ENCODE measurements at regions of chr11 and their contacts with region 1.

Region 1: GRCh38 chr11:130894322-130895025 is 21.8 kb downstream of the SNX19 start:
- DNase-seq: peak; percentile 53 to 72
- ATAC-seq: peak in 5 of 8 donors; percentile 42 to 48 (median 44)
- H3K4me3 ChIP-seq: no peak overlapping the region
- H3K27ac ChIP-seq: peak overlapping the region in 5 of 10 donors; percentile 6 to 89 (median 50)
- H3K4me1 ChIP-seq: peaks cover 0 to 63% (median 41%) of the 10 kb centered on the region in 9 donors
- H3K27me3 ChIP-seq: no peaks in the 10 kb centered on the region
- CTCF ChIP-seq: peak; percentile 75 to 93 (median 88)

Region 2: DNA sequence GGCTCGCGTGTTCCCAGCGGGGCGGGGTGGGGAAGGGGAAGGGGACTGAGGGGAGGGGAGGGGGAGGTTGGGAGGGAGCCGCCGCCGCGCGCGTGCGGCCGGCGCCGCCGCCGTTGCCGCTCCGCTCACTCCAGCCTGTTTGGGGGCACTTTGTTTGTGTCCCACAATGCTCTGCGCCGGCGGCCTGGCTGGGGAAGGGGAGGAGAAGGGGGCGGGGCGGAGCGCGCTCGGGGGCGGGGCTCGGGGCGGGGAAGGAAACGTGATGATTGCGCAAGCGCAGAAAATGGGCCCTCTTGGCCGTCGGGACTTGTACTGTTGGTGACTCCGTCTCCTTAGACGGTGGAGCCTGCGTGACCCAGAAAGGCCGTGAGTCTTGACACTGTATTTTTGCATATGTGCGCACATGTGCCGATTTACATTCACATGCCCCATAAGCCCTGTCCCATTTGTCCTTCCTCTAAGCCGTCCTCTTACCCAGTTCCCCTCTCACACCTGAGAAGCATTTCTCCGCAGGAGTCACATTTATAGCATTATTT is 579.7 kb before region 1 on chr11 and contains the start of gene ZBTB44:
- intact Hi-C with region 1: loop called in 2 of 10 experiments (anchors 10 kb)
- DNase-seq: peak; percentile 93 to 94
- ATAC-seq: peak; percentile 97 to 98 (median 98)
- H3K4me3 ChIP-seq: peak within 1 kb of the TSS; percentile 65 to 98 (median 89)
- H3K27ac ChIP-seq: peak within 1 kb of the TSS; percentile 87 to 95 (median 92)
- H3K4me1 ChIP-seq: peaks cover 0 to 47% (median 36%) of the 10 kb centered on the region in 9 donors
- H3K27me3 ChIP-seq: no peaks in the 10 kb centered on the region
- CTCF ChIP-seq: no peak
- total RNA-seq, gene ZBTB44: 36.5 to 51.6 (median 39.6) TPM

Region 3: DNA sequence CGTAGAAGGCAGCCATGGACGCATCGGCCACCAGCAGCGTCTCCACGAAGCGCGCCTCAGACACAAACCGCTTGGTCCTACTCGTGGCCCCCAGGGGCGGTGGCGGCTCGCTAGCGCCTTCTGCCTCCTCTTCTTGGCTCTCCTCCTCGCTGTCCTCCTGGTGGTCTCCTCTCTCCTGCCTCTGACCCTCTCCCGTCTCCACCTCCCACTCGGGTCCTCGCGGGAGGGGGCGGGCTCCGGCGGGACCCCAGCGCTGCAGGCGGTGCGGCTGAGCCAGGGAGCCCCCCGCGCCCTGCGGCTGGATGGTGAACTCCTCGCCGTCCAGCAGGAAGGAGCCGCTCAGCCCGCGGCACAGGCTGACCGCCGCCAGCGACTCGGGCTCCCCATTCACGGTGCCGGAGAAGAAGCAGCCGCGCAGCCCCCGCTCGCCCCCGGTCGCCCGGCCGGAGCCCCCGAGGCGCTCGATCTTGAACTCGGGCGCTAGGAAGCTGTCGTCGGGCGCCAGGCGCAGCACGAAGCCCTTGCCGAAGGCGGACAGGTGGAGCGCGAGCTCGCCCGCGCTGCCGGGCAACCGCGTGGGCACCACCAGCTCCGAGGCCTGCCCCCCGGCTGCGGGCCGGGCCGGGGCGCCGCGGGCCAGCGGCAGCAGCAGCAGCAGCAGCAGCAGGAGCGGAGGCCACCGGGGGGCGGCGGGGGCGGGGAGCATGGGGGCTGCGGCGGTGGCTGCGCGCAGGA is 466.7 kb before region 1 on chr11:
- intact Hi-C with region 1: loop called in 7 of 10 experiments (anchors 1 to 10 kb)
- DNase-seq: no peak
- ATAC-seq: peak in 7 of 8 donors; percentile 6 to 33 (median 17)
- H3K4me3 ChIP-seq: peak overlapping the region; percentile 28 to 58 (median 46)
- H3K27ac ChIP-seq: no peak overlapping the region
- H3K4me1 ChIP-seq: peaks cover 5 to 24% (median 18%) of the 10 kb centered on the region in 9 donors
- H3K27me3 ChIP-seq: peaks cover 0 to 65% (median 26%) of the 10 kb centered on the region in 7 donors
- CTCF ChIP-seq: peak in 3 of 9 donors; percentile 30 to 43 (median 36)

Region 4: DNA sequence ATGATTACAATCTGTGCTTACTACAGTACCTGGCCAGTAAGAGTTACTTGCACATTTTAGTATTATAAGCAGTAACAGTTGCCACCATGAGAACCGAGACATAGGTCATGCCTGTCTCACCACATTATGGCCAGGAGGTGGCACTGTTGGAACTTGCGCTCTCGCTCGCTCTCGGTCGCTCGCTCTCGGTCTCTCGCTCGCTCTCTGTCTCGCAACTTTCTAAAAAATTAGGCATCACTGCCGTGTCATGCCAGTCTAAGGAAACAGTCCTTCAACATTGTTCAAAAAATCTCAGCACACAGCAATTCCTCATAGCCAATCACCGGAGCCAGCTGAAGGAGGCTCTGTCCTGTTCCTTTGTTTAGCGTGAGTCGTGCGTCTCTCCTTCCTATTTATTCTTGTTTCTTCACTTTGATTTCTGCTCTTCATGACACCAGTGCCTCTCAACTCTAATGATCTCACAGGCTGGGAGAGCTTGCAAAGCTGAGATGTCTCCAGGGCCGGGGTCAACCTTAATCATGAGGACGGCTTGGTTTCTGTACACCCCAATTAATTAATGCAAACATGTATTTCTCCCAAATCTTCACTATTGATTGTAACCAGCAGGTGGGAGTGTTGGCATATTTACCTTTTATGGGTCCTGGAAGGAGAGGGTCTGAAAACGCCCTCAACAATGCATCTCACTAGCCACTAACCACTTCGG is 459.8 kb before region 1 on chr11:
- intact Hi-C with region 1: loop called (anchors 1 to 10 kb)
- DNase-seq: peak; percentile 62 to 78
- ATAC-seq: peak; percentile 86 to 94 (median 89)
- H3K4me3 ChIP-seq: peak overlapping the region; percentile 11 to 70 (median 60)
- H3K27ac ChIP-seq: peak overlapping the region in 9 of 10 donors; percentile 3 to 85 (median 76)
- H3K4me1 ChIP-seq: peaks cover 0 to 14% (median 12%) of the 10 kb centered on the region in 9 donors
- H3K27me3 ChIP-seq: peaks cover 0 to 14% (median 9%) of the 10 kb centered on the region in 7 donors
- CTCF ChIP-seq: peak; percentile 67 to 83 (median 76)

Region 5: GRCh38 chr11:130861902-130862860 is 32.3 kb before region 1 on chr11:
- intact Hi-C with region 1: loop called in 5 of 10 experiments (anchors 2 to 5 kb)
- DNase-seq: peak; percentile 89 to 91
- ATAC-seq: peak; percentile 50 to 79 (median 68)
- H3K4me3 ChIP-seq: peak overlapping the region in 1 of 10 donors; percentile 23
- H3K27ac ChIP-seq: peak overlapping the region in 3 of 10 donors; percentile 4 to 53 (median 51)
- H3K4me1 ChIP-seq: peaks cover 0 to 36% (median 16%) of the 10 kb centered on the region in 9 donors
- H3K27me3 ChIP-seq: no peaks in the 10 kb centered on the region
- CTCF ChIP-seq: peak; percentile 100

Region 6: DNA sequence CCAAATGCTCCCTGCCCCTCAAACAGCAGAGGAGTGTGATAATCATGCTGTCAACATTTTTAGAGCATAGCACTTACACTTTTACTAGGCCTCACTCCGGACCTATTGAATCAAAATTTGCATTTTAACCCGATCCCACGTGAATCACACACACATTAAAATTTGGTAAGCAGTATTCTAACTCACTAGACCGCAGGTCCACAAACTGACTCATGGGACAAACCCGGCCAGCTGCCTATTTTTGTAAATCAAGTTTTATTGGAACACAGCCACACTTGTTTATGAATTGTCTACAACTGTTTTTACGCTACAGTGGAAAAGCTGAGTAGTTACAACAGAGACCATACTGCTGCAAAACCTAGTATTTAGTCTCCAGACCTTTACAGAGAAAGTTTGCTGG is 21.5 kb before region 1 on chr11:
- intact Hi-C with region 1: no loop called
- DNase-seq: no peak
- ATAC-seq: peak in 6 of 8 donors; percentile 9 to 34 (median 30)
- H3K4me3 ChIP-seq: no peak overlapping the region
- H3K27ac ChIP-seq: peak overlapping the region in 9 of 10 donors; percentile 1 to 80 (median 72)
- H3K4me1 ChIP-seq: peaks cover 0 to 71% (median 36%) of the 10 kb centered on the region in 9 donors
- H3K27me3 ChIP-seq: no peaks in the 10 kb centered on the region
- CTCF ChIP-seq: no peak

Measured in heart right ventricle (tissue), 16 donors.